GM12878 (cell line): ENCODE measurements at regions of chr6 and their contacts with region 1.

Region 1: GRCh38 chr6:68238097-68238601 is 396.9 kb upstream of the ADGRB3 start:
- DNase-seq: no peak
- ATAC-seq: peak; percentile 80
- H3K4me3 ChIP-seq: no peak overlapping the region
- H3K27ac ChIP-seq: no peak overlapping the region
- H3K4me1 ChIP-seq: no peaks in the 10 kb centered on the region
- H3K27me3 ChIP-seq: no peaks in the 10 kb centered on the region
- CTCF ChIP-seq: no peak
- EP300 ChIP-seq: peak in 1 of 2 experiments; percentile 19; a peak in 1 of 4 replicates
- POLR2A ChIP-seq: no peak
- RAD21 ChIP-seq: no peak

Region 2: GRCh38 chr6:68252632-68253031 is 14.5 kb after region 1 on chr6:
- CTCF ChIA-PET with region 1: interaction called, 3 read pairs
- POLR2A ChIA-PET with region 1: interaction called, 4 read pairs
- RAD21 ChIA-PET with region 1: interaction called, 15 read pairs
- SMC1A ChIA-PET with region 1: interaction called, 31 read pairs
- in situ Hi-C with region 1: no loop called
- intact Hi-C with region 1: no loop called
- DNase-seq: no peak
- ATAC-seq: peak; percentile 86
- H3K4me3 ChIP-seq: 0 out of 2 replicates have a peak overlapping the region, but pooled peaks have one; percentile 3
- H3K27ac ChIP-seq: no peak overlapping the region
- H3K4me1 ChIP-seq: no peaks in the 10 kb centered on the region
- H3K27me3 ChIP-seq: no peaks in the 10 kb centered on the region
- CTCF ChIP-seq: no peak
- EP300 ChIP-seq: no peak
- POLR2A ChIP-seq: no peak
- RAD21 ChIP-seq: no peak